ENCODE measurements at regions of chr15 and their contacts with region 1.

Region 1: GRCh38 chr15:68795298-68795848 is 25.3 kb downstream of the ANP32A start:
- DNase-seq: peak; percentile 21

Region 2: GRCh38 chr15:68706256-68706655 is 89.1 kb before region 1 on chr15:
- CTCF ChIA-PET with region 1: no interaction called
- POLR2A ChIA-PET with region 1: no interaction called
- DNase-seq: no peak

Region 3: GRCh38 chr15:68749793-68750192 is 45.6 kb before region 1 on chr15:
- CTCF ChIA-PET with region 1: interaction called, 10 read pairs
- POLR2A ChIA-PET with region 1: no interaction called
- DNase-seq: no peak

Measured in HEK293T (cell line).